Activated T-helper 2 cell treated with anti-CD3 and anti-CD28 coated beads, Interferon-gamma antibody, Interleukin-2, Interleukin-4, amounts not matched to agents 10 μg/mL and 5 μg/mL and 100 μg/mL, durations not matched to agents 14 hours and 24 hours and 36 hours (primary cell): ENCODE measurements at regions of chr7 and their contacts with region 1.

Region 1: GRCh38 chr7:2403014-2403717 is at the start of gene CHST12:
- DNase-seq: peak; percentile 94
- H3K4me3 Mint-ChIP-seq: peak within 1 kb of the TSS; percentile 84
- H3K27ac Mint-ChIP-seq: peak within 1 kb of the TSS; percentile 94
- H3K4me1 Mint-ChIP-seq: peaks cover 49% of the 10 kb centered on the region
- H3K27me3 Mint-ChIP-seq: no peaks in the 10 kb centered on the region
- total RNA-seq, gene CHST12: 9.8 and 11.8 TPM in 2 replicates

Region 2: GRCh38 chr7:1569833-1570633 is 833.1 kb before region 1 on chr7 and contains the start of gene PSMG3:
- intact Hi-C with region 1: loop called (anchors 10 kb)
- DNase-seq: peak; percentile 84
- H3K4me3 Mint-ChIP-seq: peak within 1 kb of the TSS; percentile 89
- H3K27ac Mint-ChIP-seq: peak within 1 kb of the TSS; percentile 88
- H3K4me1 Mint-ChIP-seq: peaks cover 25% of the 10 kb centered on the region
- H3K27me3 Mint-ChIP-seq: no peaks in the 10 kb centered on the region
- total RNA-seq, gene PSMG3: 44.5 and 45.9 TPM in 2 replicates

Region 3: GRCh38 chr7:1925349-1925748 is 477.8 kb before region 1 on chr7:
- intact Hi-C with region 1: loop called (anchors 5 kb)
- DNase-seq: no peak
- H3K4me3 Mint-ChIP-seq: peak overlapping the region; percentile 56
- H3K27ac Mint-ChIP-seq: peak overlapping the region; percentile 38
- H3K4me1 Mint-ChIP-seq: peaks cover 65% of the 10 kb centered on the region
- H3K27me3 Mint-ChIP-seq: peaks cover 32% of the 10 kb centered on the region

Region 4: GRCh38 chr7:2354186-2354938 is 48.8 kb before region 1 on chr7 and contains the start of gene EIF3B:
- intact Hi-C with region 1: loop called (anchors 1 kb)
- DNase-seq: peak; percentile 85
- H3K4me3 Mint-ChIP-seq: peak within 1 kb of the TSS; percentile 90
- H3K27ac Mint-ChIP-seq: peak within 1 kb of the TSS; percentile 98
- H3K4me1 Mint-ChIP-seq: peaks cover 11% of the 10 kb centered on the region
- H3K27me3 Mint-ChIP-seq: no peaks in the 10 kb centered on the region
- total RNA-seq, gene EIF3B: 242 and 245 TPM in 2 replicates

Region 5: GRCh38 chr7:2451171-2452073 is 48.3 kb after region 1 on chr7:
- intact Hi-C with region 1: loop called (anchors 5 kb)
- DNase-seq: peak; percentile 60
- H3K4me3 Mint-ChIP-seq: peak overlapping the region; percentile 33
- H3K27ac Mint-ChIP-seq: no peak overlapping the region
- H3K4me1 Mint-ChIP-seq: peaks cover 3% of the 10 kb centered on the region
- H3K27me3 Mint-ChIP-seq: peaks cover 10% of the 10 kb centered on the region

Region 6: GRCh38 chr7:2519119-2519930 is 116.2 kb after region 1 on chr7 and contains the start of gene LFNG:
- intact Hi-C with region 1: loop called (anchors 2 kb)
- DNase-seq: peak; percentile 82
- H3K4me3 Mint-ChIP-seq: peak within 1 kb of the TSS; percentile 98
- H3K27ac Mint-ChIP-seq: peak within 1 kb of the TSS; percentile 79
- H3K4me1 Mint-ChIP-seq: peaks cover 27% of the 10 kb centered on the region
- H3K27me3 Mint-ChIP-seq: peaks cover 3% of the 10 kb centered on the region
- total RNA-seq, gene LFNG: 41.0 and 45.6 TPM in 2 replicates